SK-N-SH (cell line): ENCODE measurements at regions of chr15 and their contacts with region 1.

Region 1: GRCh38 chr15:34209421-34210282 is at the start of gene KATNBL1:
- DNase-seq: peak; percentile 97
- H3K4me3 ChIP-seq: peak within 1 kb of the TSS; percentile 86 to 98
- H3K27ac ChIP-seq: peak within 1 kb of the TSS; percentile 84 to 86
- H3K4me1 ChIP-seq: peaks cover 0 to 6% of the 10 kb centered on the region in 2 experiments; a peak in 2 of 4 replicates
- H3K27me3 ChIP-seq: no peaks in the 10 kb centered on the region
- CTCF ChIP-seq: peak; percentile 89
- EP300 ChIP-seq: no peak
- RAD21 ChIP-seq: peak; percentile 76
- polyA plus RNA-seq, gene KATNBL1: 13.8 and 20.3 TPM in 2 replicates

Region 2: DNA sequence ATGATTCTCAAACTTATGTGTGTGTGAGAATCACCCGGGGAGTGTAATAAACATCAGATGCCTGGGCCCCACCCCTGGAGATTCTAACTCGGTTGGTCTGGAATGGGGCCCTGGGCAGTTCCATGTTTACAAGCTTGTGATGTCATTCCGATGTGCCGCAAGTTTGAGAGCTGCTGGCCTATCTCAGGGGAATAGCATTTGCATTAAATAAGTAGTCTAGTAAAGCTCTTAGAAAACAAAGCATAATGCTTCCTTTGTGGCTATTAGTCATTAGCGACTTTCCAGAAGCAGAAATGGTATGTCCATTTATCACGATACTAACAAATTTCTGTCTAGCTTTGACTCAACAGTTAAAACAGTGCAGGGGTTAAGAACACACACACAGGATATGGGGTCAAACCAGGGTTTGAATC is 86.9 kb before region 1 on chr15:
- CTCF ChIA-PET with region 1: interaction called, 10 read pairs
- POLR2A ChIA-PET with region 1: no interaction called
- DNase-seq: no peak
- H3K4me3 ChIP-seq: no peak overlapping the region
- H3K27ac ChIP-seq: peak overlapping the region in 1 of 2 experiments; percentile 37; a peak in 1 of 4 replicates
- H3K4me1 ChIP-seq: no peaks in the 10 kb centered on the region
- H3K27me3 ChIP-seq: no peaks in the 10 kb centered on the region
- CTCF ChIP-seq: no peak
- EP300 ChIP-seq: no peak
- RAD21 ChIP-seq: no peak